ENCODE measurements at regions of chr19 and their contacts with region 1.

Region 1: DNA sequence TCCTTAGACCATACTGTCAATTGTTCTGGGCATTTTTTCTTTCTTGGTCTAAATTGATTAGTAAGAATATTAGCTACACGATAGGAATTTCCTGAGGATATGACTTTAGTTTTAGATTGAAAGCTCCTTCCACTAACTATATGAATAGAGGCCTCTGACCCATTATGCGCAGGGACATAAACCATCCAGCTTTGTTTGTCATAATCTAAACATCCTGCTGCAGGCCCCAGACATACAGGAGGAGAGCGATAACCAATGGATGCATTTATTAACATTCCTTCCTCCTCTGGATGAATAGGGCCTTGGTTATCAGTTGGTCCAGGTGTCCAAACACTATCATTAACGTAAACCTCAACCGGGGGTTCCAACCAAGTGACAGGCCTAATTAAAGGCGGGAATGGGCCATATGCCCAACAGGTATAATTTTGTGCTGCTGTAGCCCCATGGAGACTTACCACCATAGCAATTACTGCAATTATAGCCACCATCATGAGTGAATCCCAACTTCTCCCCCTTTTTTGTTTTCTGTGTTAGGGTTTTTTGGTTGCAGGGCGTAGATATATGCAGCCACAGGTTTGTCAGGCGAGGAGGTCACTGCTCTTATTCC is 32.6 kb downstream of the CLEC4M start:
- DNase-seq: no peak
- H3K4me3 ChIP-seq: no peak overlapping the region
- H3K27ac ChIP-seq: no peak overlapping the region
- H3K4me1 ChIP-seq: no peaks in the 10 kb centered on the region
- H3K27me3 ChIP-seq: peaks cover 3% of the 10 kb centered on the region
- CTCF ChIP-seq: no peak

Region 2: GRCh38 chr19:7652061-7652641 is 143.5 kb before region 1 on chr19:
- intact Hi-C with region 1: loop called (anchors 2 kb)
- DNase-seq: peak in 1 of 2 donors; percentile 87
- H3K4me3 ChIP-seq: no peak overlapping the region
- H3K27ac ChIP-seq: no peak overlapping the region
- H3K4me1 ChIP-seq: peaks cover 0 to 4% of the 10 kb centered on the region in 2 donors
- H3K27me3 ChIP-seq: no peaks in the 10 kb centered on the region
- CTCF ChIP-seq: peak; percentile 93 to 98 (median 94)

Measured in ascending aorta (tissue), 2 donors.